Activated CD4-positive, alpha-beta T cell treated with anti-CD3 and anti-CD28 coated beads, Interleukin-2, amount 10 ng/mL, durations not matched to agents 24 days and 14 days (primary cell): ENCODE measurements at regions of chrX and their contacts with region 1.

Region 1: GRCh38 chrX:47523297-47523696 is 37.7 kb upstream of the ARAF start:
- DNase-seq: peak; percentile 94
- H3K4me3 Mint-ChIP-seq: peak overlapping the region; percentile 77
- H3K27ac Mint-ChIP-seq: no peak overlapping the region
- H3K4me1 Mint-ChIP-seq: peaks cover 2% of the 10 kb centered on the region
- H3K27me3 Mint-ChIP-seq: no peaks in the 10 kb centered on the region

Region 2: DNA sequence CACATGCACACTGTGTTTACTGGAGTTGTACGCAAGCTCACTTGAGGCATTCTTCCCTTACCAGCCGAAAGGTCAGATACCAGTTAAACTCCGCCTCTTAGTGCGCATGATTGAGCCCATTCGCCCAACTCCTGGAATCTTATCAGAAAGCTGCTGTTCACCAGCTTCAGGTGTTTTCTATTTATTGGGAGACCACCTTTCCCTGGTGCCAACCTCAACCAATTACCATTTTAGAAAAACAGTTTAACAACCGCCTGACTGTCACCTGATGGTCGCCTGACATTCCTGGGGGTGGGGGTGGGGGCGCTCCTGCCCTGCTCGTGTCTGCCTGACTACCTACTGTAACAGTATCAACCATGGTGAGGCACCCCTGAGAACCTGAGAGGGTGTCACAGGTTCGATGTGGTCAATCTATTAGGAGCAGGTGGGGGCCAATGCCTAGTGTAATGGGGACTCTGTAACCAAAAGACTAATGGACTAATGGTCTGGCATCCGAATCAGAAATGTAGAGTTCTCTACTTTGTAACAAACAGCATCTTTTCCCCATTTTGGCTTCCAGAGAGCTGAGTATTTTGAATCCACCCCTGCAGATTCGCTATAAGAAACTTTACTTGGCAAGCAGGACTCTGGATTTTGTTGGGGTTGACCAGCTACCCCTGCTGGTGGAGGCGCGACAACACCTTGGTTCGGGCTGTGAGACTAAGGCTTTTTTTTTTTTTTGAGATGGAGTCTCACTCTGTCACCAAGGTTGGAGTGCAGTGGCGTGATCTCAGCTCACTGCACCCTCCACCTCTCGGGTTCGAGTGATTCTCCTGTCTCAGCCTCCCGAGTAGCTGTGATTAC is 211.1 kb before region 1 on chrX:
- intact Hi-C with region 1: loop called (anchors 1 kb)
- DNase-seq: peak; percentile 77
- H3K4me3 Mint-ChIP-seq: no peak overlapping the region
- H3K27ac Mint-ChIP-seq: no peak overlapping the region
- H3K4me1 Mint-ChIP-seq: no peaks in the 10 kb centered on the region
- H3K27me3 Mint-ChIP-seq: no peaks in the 10 kb centered on the region

Region 3: DNA sequence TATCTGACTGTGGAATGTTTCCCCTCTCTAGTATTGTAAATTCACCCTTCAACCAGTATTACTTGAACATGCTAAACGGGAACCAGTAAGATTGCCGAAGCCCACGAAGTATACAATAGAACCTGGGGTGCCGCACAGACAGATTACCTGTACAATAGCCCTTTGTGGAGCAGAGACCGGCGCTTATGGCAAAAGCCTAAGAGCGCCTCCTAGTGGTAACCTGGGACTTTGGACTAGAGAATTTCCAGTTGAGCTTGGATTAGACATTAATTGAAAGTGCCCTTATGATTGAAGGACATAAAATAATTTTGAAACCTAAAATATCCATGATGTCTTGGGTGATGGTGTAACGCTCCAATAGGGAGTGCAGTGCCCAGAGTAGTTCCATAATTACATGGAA is 138.8 kb before region 1 on chrX:
- intact Hi-C with region 1: loop called (anchors 5 kb)
- DNase-seq: peak; percentile 90
- H3K4me3 Mint-ChIP-seq: no peak overlapping the region
- H3K27ac Mint-ChIP-seq: no peak overlapping the region
- H3K4me1 Mint-ChIP-seq: peaks cover 8% of the 10 kb centered on the region
- H3K27me3 Mint-ChIP-seq: no peaks in the 10 kb centered on the region

Region 4: DNA sequence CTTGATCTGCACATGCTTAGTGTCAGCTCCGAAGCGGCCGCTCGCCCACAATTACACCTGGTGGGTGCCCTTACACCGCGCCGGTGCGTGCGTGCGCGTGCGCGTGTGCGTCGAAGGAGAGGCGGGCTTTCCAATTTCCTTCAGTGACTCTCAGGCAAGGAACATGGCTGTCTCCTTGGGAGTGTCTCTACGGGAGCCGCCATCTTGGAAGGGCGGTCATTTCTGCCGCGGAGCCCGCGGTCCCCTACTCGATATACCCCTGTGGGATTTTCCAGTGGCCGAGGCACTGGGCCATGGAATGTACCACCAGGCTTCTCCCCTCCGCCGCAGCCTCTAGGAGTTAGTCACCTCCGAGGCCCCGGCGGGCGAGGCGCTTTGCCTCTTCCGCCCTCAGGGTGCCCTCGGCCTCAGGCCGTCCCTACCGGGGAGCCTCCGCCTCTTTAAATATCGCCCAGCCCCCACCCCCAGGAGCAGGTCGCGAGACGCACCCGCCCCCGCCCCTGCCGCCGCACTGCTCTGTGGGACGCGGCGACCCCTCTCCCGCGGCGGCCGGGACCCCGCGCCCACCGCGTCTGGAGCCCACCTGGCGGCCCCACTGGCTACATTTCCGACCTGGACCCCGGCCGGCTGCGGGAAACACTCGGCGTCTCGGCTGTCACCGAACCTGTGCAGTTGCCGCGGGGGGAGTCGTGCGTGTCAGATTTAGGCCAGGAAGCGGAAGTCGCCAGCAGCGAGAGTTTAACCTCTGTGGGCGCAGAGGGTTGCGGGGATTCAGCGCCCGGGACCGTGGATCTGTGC is 40.6 kb before region 1 on chrX and contains the start of gene ZNF41:
- intact Hi-C with region 1: loop called (anchors 5 kb)
- DNase-seq: peak; percentile 90
- H3K4me3 Mint-ChIP-seq: peak within 1 kb of the TSS; percentile 97
- H3K27ac Mint-ChIP-seq: peak within 1 kb of the TSS; percentile 90
- H3K4me1 Mint-ChIP-seq: peaks cover 17% of the 10 kb centered on the region
- H3K27me3 Mint-ChIP-seq: no peaks in the 10 kb centered on the region
- total RNA-seq, gene ZNF41: 10.0 and 10.5 TPM in 2 replicates